ENCODE measurements at regions of chr17 and their contacts with region 1.

Region 1: DNA sequence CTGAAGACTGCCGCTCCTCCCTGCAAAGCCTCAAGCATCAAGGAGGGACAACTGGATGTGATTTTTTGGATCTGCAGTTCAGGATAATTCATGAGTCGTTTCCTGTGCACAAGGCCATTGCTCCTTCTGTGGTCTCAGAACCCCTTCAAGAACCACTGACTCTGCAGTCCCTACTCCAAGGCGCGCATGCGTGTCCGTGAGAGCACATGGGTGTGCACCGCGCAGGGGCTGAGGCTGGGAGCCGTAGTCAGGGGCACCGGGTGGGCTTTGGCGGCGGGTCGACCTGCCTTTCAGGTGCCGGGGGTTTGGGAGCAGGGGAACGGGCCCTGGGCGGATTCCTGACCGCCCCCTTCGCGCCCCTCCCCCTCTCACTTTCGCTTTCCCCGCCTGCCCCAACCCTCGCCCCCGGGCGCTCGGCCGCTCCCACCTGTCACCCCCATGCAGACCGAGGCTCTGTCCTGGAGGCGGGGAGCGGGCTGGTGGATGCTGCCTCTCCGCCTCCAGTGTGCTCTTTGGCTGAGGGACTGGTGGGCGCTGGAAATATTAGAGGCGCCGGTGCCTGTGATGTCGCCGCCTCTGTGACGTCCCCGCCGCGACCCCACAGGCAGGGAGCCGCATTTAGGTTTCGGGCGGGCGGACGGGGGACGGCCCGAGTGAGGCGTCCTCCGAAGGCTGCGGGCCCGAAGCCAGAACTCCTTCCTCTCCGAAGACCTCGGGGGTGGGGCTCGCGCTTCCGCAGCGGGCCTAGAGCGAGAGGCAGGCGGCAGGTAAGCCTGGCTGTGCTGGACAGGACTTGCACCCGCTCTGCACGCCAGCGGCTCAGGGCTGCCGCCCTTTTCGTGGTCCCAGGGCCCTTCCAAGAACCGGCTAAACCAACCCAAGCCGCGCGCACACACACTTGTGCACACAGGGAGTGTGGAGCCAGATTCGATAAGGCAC is at the start of gene SPATA32:
- DNase-seq: no peak
- total RNA-seq, gene SPATA32: not detected

Region 2: DNA sequence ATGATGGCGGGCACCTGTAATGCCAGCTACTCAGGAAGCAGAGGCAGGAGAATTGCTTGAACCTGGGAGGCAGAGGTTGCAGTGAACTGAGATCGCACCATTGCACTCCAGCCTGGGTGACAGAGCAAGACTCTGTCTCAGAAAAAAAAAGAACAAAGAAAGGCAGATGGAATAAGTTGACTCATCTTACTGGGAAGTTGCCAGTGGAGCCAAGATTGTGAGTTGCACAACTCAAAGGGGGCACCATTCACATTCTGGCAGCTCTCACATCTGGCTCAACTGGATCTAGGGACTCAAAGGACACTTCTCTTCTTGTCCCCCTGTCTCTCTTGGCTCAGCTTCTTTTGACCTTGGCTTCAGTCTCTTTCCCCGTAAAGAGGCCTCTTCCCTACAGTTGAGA is 1662.0 kb before region 1 on chr17:
- intact Hi-C with region 1: loop called in 1 of 2 experiments (anchors 10 kb)
- DNase-seq: no peak

Measured in posterior vena cava (tissue), 2 donors.